Naive thymus-derived CD4-positive, alpha-beta T cell (primary cell): ENCODE measurements at regions of chr17 and their contacts with region 1.

Region 1: GRCh38 chr17:43006639-43007551 is at the start of gene IFI35:
- DNase-seq: peak; percentile 63 to 85 (median 82)
- ATAC-seq: peak; percentile 99
- H3K4me3 ChIP-seq: peak within 1 kb of the TSS; percentile 97
- H3K4me3 Mint-ChIP-seq: peak within 1 kb of the TSS; percentile 86 to 100 (median 100)
- H3K27ac ChIP-seq: peak within 1 kb of the TSS; percentile 99
- H3K27ac Mint-ChIP-seq: peak within 1 kb of the TSS; percentile 94 to 100 (median 100)
- H3K4me1 ChIP-seq: no peaks in the 10 kb centered on the region
- H3K4me1 Mint-ChIP-seq: peaks cover 6 to 25% (median 24%) of the 10 kb centered on the region in 7 donors
- H3K27me3 ChIP-seq: no peaks in the 10 kb centered on the region
- H3K27me3 Mint-ChIP-seq: no peaks in the 10 kb centered on the region
- total RNA-seq, gene IFI35: 23.5 to 145 (median 32.1) TPM

Region 2: DNA sequence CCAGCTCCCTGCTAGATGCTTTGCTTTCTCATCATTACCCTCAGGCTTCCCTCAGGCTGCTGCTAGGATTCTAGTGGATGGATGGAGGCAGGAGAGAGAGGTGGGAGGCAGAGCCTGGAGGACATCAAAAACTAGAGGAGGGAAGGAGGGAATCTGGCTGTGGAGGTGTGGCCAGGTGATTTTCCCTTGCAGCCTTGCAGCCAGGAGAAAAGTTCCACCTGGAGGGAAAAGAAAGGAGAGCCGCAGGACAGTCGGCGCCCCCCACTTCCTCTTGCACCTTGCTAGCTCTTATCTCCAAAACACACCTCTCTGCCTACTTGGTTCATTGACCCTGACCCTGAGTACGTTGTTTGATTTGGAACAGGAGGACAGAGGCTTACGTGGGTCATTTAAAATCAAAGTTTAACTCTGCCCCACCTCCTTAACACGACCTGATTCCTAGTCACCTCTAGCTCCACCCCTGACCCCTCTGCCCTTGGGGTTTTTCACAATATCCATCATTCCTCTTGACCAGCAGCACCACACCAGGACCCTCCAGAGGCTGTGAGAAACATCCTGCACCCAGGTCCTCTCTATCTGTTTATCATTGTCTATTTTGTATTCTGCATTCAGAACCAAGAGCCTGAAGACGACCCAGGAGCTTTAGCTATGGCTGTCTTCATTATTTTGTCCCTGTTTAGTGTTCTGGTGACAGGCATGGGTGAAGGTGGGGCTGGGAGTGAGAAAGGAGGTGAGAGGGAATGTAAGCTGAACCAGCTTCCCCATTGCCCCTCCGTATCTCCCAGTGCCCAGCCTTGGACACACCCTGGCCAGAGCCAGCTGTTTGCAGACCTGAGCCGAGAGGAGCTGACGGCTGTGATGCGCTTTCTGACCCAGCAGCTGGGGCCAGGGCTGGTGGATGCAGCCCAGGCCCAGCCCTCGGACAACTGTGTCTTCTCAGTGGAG is 140.0 kb before region 1 on chr17:
- CTCF ChIA-PET with region 1: no interaction called
- POLR2A ChIA-PET with region 1: no interaction called
- intact Hi-C with region 1: no loop called
- DNase-seq: no peak
- ATAC-seq: no peak
- H3K4me3 ChIP-seq: no peak overlapping the region
- H3K4me3 Mint-ChIP-seq: no peak overlapping the region
- H3K27ac ChIP-seq: no peak overlapping the region
- H3K27ac Mint-ChIP-seq: no peak overlapping the region
- H3K4me1 ChIP-seq: no peaks in the 10 kb centered on the region
- H3K4me1 Mint-ChIP-seq: peaks cover 0 to 2% (median 0%) of the 10 kb centered on the region in 7 donors
- H3K27me3 ChIP-seq: no peaks in the 10 kb centered on the region
- H3K27me3 Mint-ChIP-seq: peaks cover 9 to 20% (median 18%) of the 10 kb centered on the region in 5 donors

Region 3: GRCh38 chr17:43024407-43025289 is 17.8 kb after region 1 on chr17 and contains the start of gene RND2:
- CTCF ChIA-PET with region 1: interaction called, 3 read pairs
- POLR2A ChIA-PET with region 1: interaction called, 8 read pairs
- intact Hi-C with region 1: loop called (anchors 1 kb)
- DNase-seq: peak; percentile 65 to 85 (median 77)
- ATAC-seq: peak; percentile 81
- H3K4me3 ChIP-seq: peak within 1 kb of the TSS; percentile 70
- H3K4me3 Mint-ChIP-seq: peak within 1 kb of the TSS; percentile 86 to 95 (median 93)
- H3K27ac ChIP-seq: peak within 1 kb of the TSS; percentile 66
- H3K27ac Mint-ChIP-seq: peak within 1 kb of the TSS; percentile 80 to 91 (median 88)
- H3K4me1 ChIP-seq: peaks cover 21% of the 10 kb centered on the region in 2 donors
- H3K4me1 Mint-ChIP-seq: peaks cover 16 to 28% (median 21%) of the 10 kb centered on the region in 7 donors
- H3K27me3 ChIP-seq: no peaks in the 10 kb centered on the region
- H3K27me3 Mint-ChIP-seq: peaks cover 0 to 16% (median 0%) of the 10 kb centered on the region in 5 donors
- total RNA-seq, gene RND2: 0.08 to 0.74 (median 0.38) TPM in 4 of 5 experiments, not detected in the other

Region 4: DNA sequence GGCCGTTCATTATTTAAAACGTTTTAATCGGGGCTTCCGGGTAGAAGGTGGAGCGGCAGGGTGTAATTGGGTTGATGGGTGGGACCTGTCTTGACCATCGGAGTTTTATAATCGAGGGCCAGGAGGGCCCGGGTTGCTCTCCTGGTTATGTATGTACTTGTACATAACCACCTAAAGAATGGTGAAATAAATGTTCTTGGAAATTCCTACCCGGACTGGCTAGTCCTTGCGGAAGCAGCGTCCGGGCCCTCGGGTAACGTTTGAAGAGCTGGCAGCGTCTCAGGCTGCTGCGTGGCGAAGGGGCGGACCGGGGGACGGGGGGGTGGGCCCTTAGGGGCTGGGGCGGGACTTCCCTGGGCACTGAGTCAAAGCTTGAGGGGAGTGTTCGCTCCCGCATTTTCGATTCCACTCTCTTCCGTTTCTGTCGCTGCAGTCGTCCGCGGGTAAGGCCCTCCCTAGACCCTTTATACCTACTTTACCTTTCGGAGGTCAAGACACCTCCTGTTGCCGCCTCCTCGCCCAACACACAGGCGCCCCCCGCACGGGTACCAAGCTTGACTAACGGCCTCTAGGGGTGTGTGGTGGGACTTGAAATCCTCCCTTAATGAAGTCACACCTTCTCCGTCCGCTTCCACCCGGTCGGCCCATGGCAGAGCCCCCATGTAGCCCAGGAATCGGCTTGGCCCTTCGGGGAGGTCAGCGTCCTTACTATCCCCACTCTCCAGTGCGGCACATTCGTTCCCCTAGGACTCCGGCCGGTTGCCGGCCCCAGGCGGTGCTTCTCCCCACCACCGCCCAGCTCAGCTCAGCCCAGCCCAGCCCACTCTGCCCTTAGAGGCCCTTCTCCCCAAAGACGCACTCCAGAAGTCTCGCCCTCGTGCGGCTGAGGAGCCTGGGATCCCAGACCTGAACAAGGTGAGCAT is 204.8 kb after region 1 on chr17 and contains the start of gene TMEM106A:
- CTCF ChIA-PET with region 1: interaction called, 3 read pairs
- POLR2A ChIA-PET with region 1: interaction called, 3 read pairs
- intact Hi-C with region 1: loop called in 1 of 2 experiments (anchors 1 kb)
- DNase-seq: peak; percentile 50 to 72 (median 70)
- ATAC-seq: peak; percentile 93
- H3K4me3 ChIP-seq: peak within 1 kb of the TSS; percentile 89
- H3K4me3 Mint-ChIP-seq: peak within 1 kb of the TSS; percentile 89 to 100 (median 96)
- H3K27ac ChIP-seq: peak within 1 kb of the TSS; percentile 86
- H3K27ac Mint-ChIP-seq: peak within 1 kb of the TSS; percentile 89 to 98 (median 94)
- H3K4me1 ChIP-seq: peaks cover 15 to 17% of the 10 kb centered on the region in 2 donors
- H3K4me1 Mint-ChIP-seq: peaks cover 24 to 55% (median 46%) of the 10 kb centered on the region in 7 donors
- H3K27me3 ChIP-seq: no peaks in the 10 kb centered on the region
- H3K27me3 Mint-ChIP-seq: no peaks in the 10 kb centered on the region
- total RNA-seq, gene TMEM106A: 10.4 to 20.7 (median 13.9) TPM

Region 5: DNA sequence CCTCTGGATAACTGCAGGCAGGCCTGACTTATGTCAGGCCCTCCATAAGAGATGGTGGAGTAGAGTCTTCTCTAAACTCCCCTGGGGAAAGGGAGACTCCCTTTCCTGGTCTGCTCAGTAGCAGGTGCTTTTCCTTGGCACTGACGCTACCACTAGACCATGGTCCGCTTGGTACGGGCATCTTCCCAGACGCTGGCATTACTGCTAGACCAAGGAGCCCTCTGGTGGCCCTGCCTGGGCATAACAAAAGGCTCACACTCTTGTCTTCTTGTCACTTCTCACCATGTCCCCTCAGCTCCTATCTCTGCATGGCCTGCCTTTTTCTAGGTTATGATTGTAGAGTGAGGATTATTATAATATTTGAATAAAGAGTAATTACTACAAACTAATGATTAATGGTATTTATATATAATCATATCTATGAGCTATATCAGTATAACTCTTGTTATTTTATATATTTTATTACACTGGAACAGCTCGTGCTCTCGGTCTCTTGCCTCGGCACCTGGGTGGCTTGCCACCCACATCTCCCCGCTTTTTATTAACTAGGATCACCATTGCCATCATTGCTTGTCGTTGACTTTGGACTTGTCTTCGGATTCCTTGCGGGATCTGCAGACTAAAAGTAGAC is 332.1 kb after region 1 on chr17:
- CTCF ChIA-PET with region 1: interaction called, 5 read pairs
- POLR2A ChIA-PET with region 1: interaction called, 3 read pairs
- intact Hi-C with region 1: loop called in 1 of 2 experiments (anchors 1 kb)
- DNase-seq: peak; percentile 37 to 62 (median 55)
- ATAC-seq: no peak
- H3K4me3 ChIP-seq: no peak overlapping the region
- H3K4me3 Mint-ChIP-seq: no peak overlapping the region
- H3K27ac ChIP-seq: no peak overlapping the region
- H3K27ac Mint-ChIP-seq: no peak overlapping the region
- H3K4me1 ChIP-seq: peaks cover 1% of the 10 kb centered on the region in 2 donors
- H3K4me1 Mint-ChIP-seq: peaks cover 3 to 25% (median 11%) of the 10 kb centered on the region in 7 donors
- H3K27me3 ChIP-seq: no peaks in the 10 kb centered on the region
- H3K27me3 Mint-ChIP-seq: peaks cover 0 to 3% (median 0%) of the 10 kb centered on the region in 5 donors

Region 6: GRCh38 chr17:43475494-43476089 is 468.7 kb after region 1 on chr17:
- CTCF ChIA-PET with region 1: no interaction called
- POLR2A ChIA-PET with region 1: no interaction called
- intact Hi-C with region 1: no loop called
- DNase-seq: no peak
- ATAC-seq: no peak
- H3K4me3 ChIP-seq: no peak overlapping the region
- H3K4me3 Mint-ChIP-seq: no peak overlapping the region
- H3K27ac ChIP-seq: no peak overlapping the region
- H3K27ac Mint-ChIP-seq: no peak overlapping the region
- H3K4me1 ChIP-seq: no peaks in the 10 kb centered on the region
- H3K4me1 Mint-ChIP-seq: no peaks in the 10 kb centered on the region
- H3K27me3 ChIP-seq: no peaks in the 10 kb centered on the region
- H3K27me3 Mint-ChIP-seq: peaks cover 0 to 13% (median 4%) of the 10 kb centered on the region in 5 donors